AG04450 (cell line): ENCODE measurements at regions of chr11 and their contacts with region 1.

Region 1: DNA sequence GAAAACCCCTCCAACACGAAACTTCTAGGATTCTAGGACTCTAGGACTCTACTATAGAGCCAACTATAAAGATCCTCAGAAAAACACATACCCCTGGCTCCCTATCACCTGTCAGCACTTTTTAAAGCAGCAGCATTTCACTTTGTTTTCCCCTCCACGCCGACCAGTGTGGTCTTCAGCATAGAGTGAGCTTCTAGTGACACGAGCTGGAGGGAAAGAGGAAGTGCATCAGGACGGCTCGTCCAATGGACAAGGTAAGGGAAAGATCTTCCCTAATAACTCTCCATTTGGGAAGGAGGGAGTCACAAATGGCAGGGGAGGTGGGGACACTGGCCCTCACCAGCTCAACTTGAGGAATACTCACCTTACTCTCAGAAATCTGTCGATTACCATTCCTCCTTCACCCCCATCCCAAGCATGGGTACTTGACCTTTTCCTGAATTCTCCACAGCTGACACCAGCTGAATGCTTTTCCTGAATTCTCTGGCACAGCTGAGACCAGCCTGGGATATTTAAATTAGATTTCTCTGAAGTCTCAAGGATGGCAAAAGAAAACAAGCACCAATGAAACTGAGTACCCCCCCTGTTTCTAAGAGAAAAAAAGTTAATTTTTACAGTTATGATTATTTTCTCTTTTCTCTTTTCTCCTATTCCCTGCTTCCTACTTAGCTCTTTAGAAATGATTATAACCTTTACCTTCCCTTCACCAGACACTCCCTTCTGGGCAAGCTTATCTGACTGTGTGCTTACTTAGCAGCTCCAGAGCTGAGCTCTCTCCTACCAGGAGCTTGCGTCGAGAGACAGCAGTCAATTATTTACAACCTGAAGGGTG is 33.3 kb upstream of the NNMT start:
- DNase-seq: no peak
- H3K4me3 ChIP-seq: no peak overlapping the region
- H3K27ac ChIP-seq: no peak overlapping the region
- H3K27me3 ChIP-seq: peaks cover 36% of the 10 kb centered on the region
- CTCF ChIP-seq: peak; percentile 77

Region 2: DNA sequence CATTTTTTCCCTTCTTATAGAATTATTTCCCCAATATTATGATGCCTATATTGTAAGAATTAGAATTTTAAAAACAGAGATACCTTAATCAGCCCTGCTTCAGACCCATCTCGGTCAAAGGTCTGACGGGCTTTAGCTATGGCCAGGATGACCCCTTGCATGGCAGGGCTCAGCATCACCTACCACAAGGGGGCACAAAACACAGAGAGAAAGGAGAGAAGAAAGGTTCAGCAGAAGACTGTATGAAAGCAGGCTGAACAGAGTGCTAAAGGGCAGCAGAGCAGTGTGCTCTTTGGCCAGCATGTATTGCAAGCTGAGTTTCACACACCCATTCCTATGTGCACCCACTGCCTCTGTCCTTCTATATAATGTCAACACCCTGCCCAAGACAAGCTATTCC is 456.5 kb before region 1 on chr11:
- CTCF ChIA-PET with region 1: interaction called, 17 read pairs
- POLR2A ChIA-PET with region 1: no interaction called
- DNase-seq: no peak
- H3K4me3 ChIP-seq: no peak overlapping the region
- H3K27ac ChIP-seq: no peak overlapping the region
- H3K27me3 ChIP-seq: no peaks in the 10 kb centered on the region
- CTCF ChIP-seq: peak; percentile 52

Region 3: GRCh38 chr11:113896156-113896879 is 366.6 kb before region 1 on chr11:
- CTCF ChIA-PET with region 1: interaction called, 205 read pairs
- POLR2A ChIA-PET with region 1: no interaction called
- DNase-seq: no peak
- H3K4me3 ChIP-seq: no peak overlapping the region
- H3K27ac ChIP-seq: no peak overlapping the region
- H3K27me3 ChIP-seq: peaks cover 8% of the 10 kb centered on the region
- CTCF ChIP-seq: peak; percentile 74

Region 4: DNA sequence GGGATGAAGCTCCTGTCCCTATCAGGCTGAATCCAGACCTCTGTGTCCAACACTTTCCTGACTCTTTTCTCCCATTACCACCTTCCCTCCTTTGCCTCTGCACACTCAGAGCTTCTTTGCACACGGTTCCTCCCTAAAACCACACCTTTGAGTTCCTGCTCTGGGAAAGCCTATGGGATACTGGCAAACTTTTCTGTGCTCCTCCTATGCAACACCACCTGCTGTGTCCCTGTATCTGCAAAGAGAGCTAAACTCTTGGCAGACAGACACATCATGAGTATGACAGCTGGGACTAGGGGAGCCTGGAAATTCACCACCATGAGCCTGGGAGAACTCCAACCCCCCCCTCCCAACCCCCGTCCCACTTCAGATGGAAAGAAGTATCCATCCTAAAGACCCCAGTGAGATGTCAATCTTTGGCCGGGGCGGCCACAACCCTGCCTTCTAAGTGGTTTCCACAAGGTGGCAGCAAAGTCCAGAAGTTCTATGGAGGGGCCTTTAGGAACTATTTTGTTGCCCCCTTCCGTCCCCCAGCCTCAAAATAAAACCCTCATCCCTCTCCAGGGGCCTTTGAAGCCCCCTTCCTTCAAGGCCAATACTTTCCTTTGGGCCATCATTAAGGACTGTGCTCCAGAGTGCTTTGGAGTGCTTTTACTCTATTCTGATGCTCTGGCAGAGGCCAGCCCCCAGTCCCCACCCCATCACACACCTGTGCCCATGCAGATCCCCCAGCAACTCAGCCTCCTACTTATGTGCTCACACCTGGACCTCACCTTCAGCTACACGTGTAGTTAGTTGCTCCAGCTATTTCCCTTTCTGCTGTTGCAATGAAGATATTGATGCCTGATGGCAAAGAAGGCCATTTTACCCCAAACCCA is 268.6 kb before region 1 on chr11:
- CTCF ChIA-PET with region 1: interaction called, 173 read pairs
- POLR2A ChIA-PET with region 1: no interaction called
- DNase-seq: no peak
- H3K4me3 ChIP-seq: no peak overlapping the region
- H3K27ac ChIP-seq: no peak overlapping the region
- H3K27me3 ChIP-seq: no peaks in the 10 kb centered on the region
- CTCF ChIP-seq: peak; percentile 69

Region 5: DNA sequence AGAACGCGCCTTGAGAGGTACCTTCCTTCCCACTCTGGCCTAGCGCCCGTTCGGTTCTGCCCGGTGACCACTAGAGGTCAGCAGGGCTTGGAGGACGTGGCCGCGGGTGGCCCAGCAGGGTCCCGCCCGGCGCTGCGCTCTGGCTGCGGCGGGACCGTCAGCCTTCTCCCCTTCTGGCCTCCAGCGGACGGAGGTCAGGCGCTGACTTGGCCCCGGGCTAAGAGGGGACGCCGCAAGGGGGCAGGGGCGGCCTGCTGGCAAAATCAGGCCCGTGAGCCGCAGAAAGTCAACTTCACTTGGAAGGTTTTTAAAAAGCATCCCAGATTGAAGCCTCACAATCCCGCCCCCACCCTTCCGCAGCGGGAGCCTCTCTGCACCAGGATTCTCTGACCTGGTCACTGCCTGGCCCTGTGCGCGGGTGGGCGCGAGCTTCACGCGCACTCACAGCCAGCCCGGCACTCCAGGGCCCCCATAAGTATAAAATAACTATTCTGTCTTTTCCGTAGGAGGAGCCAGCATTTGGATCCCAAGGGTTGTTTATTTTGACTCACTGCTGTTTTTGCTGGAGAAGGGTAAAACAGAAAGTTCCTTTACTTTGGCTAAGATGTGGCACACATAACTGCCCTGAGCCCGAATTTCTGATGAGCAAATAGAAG is 226.6 kb before region 1 on chr11:
- CTCF ChIA-PET with region 1: interaction called, 185 read pairs
- POLR2A ChIA-PET with region 1: no interaction called
- DNase-seq: no peak
- H3K4me3 ChIP-seq: peak overlapping the region; percentile 39
- H3K27ac ChIP-seq: no peak overlapping the region
- H3K27me3 ChIP-seq: peaks cover 6% of the 10 kb centered on the region
- CTCF ChIP-seq: peak; percentile 69

Region 6: DNA sequence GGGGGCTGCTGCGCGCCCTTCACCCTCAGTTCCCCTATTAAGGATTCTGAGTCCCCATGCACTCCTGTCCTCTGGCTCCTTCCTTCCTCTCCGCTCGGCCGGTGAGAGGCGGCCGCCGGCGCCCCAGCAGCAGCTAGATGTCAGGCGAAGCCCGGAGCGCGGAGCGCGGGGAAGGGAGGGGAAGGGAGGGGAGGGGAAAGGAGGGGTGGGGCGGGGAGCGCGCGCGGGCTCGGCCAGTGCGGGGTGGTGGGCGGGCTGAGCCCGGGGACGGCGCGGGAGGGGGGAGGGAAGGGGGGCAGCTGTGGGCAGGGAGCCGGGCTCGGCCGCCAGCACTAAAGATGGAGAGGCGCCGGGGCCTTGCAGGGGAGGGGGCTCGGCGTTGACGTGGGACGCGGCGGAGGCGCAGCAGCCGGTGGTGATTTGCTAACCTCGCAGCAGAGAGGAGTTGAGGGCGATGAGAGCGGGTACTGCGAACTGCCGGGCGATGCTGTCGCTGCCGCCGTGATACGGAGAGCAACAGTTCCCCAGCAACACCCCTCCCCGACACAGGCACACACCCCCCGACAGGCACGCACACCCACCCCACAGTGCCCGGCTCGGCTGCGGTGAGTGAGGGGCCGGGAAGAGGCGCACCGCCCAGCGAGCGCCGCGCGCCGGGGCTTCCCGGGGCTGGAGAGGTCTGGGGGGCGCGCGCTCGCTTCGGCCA is 203.5 kb before region 1 on chr11 and contains the start of gene ZBTB16:
- CTCF ChIA-PET with region 1: interaction called, 11 read pairs
- POLR2A ChIA-PET with region 1: no interaction called
- DNase-seq: no peak
- H3K4me3 ChIP-seq: peak within 1 kb of the TSS; percentile 56; the same call in 1 of the 2 replicates
- H3K27ac ChIP-seq: no peak within 1 kb of the TSS
- H3K27me3 ChIP-seq: peaks cover 53% of the 10 kb centered on the region
- CTCF ChIP-seq: no peak
- polyA plus RNA-seq, gene ZBTB16: not detected in 2 replicates

Region 7: GRCh38 chr11:114280696-114281095 is 17.8 kb after region 1 on chr11:
- CTCF ChIA-PET with region 1: interaction called, 25 read pairs
- POLR2A ChIA-PET with region 1: no interaction called
- DNase-seq: peak; percentile 65
- H3K4me3 ChIP-seq: no peak overlapping the region
- H3K27ac ChIP-seq: no peak overlapping the region
- H3K27me3 ChIP-seq: peaks cover 7% of the 10 kb centered on the region
- CTCF ChIP-seq: peak; percentile 82